Naive thymus-derived CD4-positive, alpha-beta T cell (primary cell): ENCODE measurements at regions of chr13 and their contacts with region 1.

Region 1: DNA sequence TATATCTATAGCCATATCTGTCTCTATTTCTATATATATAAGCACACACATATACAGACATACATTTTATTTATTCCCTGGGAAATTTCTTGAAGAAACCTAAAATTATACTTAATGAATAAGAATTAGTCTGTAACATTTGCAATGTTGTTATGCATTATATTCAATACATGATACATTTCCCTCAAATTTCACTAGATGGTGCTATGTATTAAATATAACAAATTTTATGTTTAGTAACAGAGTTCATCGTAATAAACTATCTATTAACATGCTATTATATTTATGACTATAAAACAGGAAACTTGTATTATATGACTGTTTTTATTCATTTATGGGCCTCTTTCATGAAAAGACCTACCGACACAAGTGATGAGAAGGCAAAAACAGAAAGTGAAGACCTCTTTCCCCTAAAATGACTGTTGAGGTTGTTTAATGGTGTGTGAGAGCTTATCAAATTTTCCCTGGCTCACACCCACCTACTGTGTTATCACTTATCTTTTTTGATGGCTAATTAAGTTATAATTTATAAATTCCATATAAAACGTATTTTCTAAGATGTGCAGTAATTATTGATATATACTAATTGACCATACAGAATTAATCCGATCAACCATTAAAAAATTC is 881.9 kb downstream of the SLITRK6 start:
- DNase-seq: no peak
- ATAC-seq: no peak
- H3K4me3 ChIP-seq: no peak overlapping the region
- H3K4me3 Mint-ChIP-seq: no peak overlapping the region
- H3K27ac ChIP-seq: no peak overlapping the region
- H3K27ac Mint-ChIP-seq: no peak overlapping the region
- H3K4me1 ChIP-seq: no peaks in the 10 kb centered on the region
- H3K4me1 Mint-ChIP-seq: no peaks in the 10 kb centered on the region
- H3K27me3 ChIP-seq: no peaks in the 10 kb centered on the region
- H3K27me3 Mint-ChIP-seq: no peaks in the 10 kb centered on the region

Region 2: DNA sequence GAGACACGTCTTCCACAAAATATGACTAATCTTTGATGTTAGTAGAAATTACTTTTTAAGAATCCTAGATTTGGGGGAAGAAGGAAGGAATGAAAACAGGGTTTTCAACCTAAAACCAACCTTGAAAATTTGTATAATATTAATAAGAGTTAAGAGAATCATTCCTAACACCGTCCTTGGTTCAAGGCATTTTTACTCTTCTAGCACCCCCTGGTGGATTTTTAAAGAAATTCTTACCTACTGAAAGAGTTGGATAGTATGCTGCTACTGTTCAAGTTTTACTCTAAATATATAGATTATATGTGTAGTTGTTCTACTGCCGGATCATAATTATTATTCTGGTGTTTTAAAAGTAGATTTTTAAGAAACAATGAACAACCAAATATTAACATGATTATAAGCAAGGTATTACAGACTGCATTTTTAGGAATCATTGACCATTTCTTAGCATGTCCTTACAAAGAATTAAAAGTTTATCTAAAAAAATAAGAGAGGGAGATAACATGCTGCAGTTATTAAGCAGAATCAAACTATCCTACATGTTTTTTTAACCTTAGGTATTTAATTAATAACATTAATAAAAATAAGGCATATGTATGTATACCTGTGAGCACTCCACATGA is 889.3 kb after region 1 on chr13:
- CTCF ChIA-PET with region 1: no interaction called
- POLR2A ChIA-PET with region 1: no interaction called
- intact Hi-C with region 1: loop called (anchors 1 to 5 kb)
- DNase-seq: peak in 4 of 9 donors; percentile 4 to 27 (median 8)
- ATAC-seq: no peak
- H3K4me3 ChIP-seq: no peak overlapping the region
- H3K4me3 Mint-ChIP-seq: no peak overlapping the region
- H3K27ac ChIP-seq: no peak overlapping the region
- H3K27ac Mint-ChIP-seq: no peak overlapping the region
- H3K4me1 ChIP-seq: no peaks in the 10 kb centered on the region
- H3K4me1 Mint-ChIP-seq: no peaks in the 10 kb centered on the region
- H3K27me3 ChIP-seq: no peaks in the 10 kb centered on the region
- H3K27me3 Mint-ChIP-seq: no peaks in the 10 kb centered on the region

Region 3: DNA sequence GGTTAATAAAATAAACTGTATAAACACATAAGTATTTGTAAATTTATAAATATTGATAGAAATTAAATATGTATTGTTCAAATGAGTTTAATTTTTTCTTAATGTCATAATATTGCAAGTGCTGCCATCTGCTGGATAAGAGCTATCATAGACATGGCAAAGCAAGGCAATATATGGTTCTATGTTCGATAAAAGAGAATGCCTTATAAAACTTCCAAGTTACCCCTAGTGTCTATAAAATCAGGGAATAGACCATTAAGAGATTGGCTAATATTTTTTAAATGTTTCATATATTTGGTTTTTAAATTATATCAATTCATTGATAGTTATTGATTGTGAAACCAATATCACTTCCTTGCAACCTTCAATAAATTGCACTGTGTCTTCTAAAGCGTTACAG is 910.8 kb after region 1 on chr13:
- CTCF ChIA-PET with region 1: no interaction called
- POLR2A ChIA-PET with region 1: no interaction called
- intact Hi-C with region 1: loop called in 1 of 2 experiments (anchors 5 kb)
- DNase-seq: no peak
- ATAC-seq: no peak
- H3K4me3 ChIP-seq: no peak overlapping the region
- H3K4me3 Mint-ChIP-seq: no peak overlapping the region
- H3K27ac ChIP-seq: no peak overlapping the region
- H3K27ac Mint-ChIP-seq: no peak overlapping the region
- H3K4me1 ChIP-seq: no peaks in the 10 kb centered on the region
- H3K4me1 Mint-ChIP-seq: no peaks in the 10 kb centered on the region
- H3K27me3 ChIP-seq: no peaks in the 10 kb centered on the region
- H3K27me3 Mint-ChIP-seq: no peaks in the 10 kb centered on the region